Activated CD4-positive, alpha-beta memory T cell treated with anti-CD3 and anti-CD28 coated beads for 36 hours (primary cell): ENCODE measurements at regions of chr11 and their contacts with region 1.

Region 1: DNA sequence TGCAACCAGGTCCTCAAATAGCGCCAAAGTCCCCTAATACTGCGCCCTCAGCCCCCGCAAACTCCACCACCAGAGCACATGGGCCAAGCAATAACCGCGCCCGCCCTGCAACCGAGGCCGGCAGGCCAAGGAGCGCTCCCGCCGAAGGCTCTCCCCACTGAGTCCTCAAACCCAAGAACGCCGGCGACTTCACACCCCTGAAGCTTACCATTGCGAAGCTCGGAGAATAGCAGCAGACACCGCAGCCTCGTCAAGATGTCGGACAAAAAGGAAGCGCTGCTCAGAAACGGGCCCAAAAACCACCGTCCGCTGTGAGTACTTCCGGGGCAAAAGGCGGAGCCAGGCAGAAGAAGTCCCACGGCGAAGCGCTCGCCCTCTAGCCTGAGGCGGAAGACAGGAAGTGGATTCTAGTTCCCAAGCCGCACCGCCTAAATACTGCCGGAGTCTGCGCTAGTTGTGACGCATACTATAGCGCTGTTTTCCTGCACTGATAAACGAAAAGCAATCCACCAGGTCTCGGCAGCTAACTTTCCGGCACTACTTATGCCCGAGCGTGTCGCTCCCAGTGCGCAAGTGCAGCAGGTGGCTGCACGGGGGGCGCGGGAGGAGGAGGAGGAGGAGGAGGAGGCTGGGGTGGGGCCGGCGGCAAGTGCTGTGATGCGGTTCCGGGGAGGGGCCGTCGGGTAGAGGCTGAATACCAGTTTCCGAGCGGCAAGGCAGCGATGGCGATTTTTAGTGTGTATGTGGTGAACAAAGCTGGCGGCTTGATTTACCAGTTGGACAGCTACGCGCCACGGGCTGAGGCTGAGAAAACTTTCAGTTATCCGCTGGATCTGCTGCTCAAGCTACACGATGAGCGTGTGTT is at the starts of genes RPS25 and TRAPPC4:
- DNase-seq: peak; percentile 98
- H3K4me3 Mint-ChIP-seq: peak within 1 kb of the TSS; percentile 99
- H3K27ac Mint-ChIP-seq: peak within 1 kb of the TSS; percentile 99
- H3K4me1 Mint-ChIP-seq: peaks cover 54% of the 10 kb centered on the region
- H3K27me3 Mint-ChIP-seq: no peaks in the 10 kb centered on the region
- total RNA-seq, gene RPS25: 1,852 to 1,922 TPM
- total RNA-seq, gene TRAPPC4: 86.4 to 87.8 TPM

Region 2: DNA sequence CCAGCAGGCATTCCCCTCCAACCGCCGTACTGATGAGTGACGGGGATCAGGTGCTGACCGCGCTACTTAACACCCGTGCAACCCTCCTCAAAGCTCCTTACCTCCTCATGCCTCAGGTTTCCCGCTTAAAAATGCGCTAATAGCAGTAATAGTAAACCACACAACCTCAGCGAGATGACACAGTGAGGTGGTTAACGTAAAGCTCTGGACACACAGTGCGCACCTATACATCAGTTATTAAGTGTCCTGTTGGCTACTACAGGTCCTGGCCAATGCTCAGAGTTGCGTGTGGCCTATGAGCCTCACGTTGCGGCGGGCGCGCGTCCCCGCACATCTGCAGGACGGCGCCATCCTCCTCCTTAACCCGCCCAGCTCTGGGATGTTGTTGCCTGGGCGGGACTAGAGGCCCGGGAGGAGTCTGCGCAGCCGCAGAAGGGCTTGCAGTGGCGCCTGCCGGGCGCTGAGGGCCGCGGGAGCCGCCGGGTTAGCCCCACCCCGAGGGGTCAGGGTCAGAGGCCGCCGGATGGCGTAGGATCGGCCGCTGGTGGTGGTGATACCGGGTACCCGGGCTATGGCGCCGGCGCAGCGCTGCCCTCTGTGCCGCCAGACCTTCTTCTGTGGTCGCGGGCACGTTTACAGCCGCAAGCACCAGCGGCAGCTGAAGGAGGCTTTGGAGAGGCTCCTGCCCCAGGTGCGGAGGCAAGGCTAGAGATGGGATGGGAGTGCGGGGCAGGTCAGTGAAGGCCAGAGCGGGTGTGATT is 20.5 kb before region 1 on chr11 and contains the start of gene CENATAC:
- CTCF ChIA-PET with region 1: interaction called, 5 read pairs
- POLR2A ChIA-PET with region 1: interaction called, 23 read pairs
- intact Hi-C with region 1: loop called (anchors 1 kb)
- DNase-seq: peak; percentile 98
- H3K4me3 Mint-ChIP-seq: peak within 1 kb of the TSS; percentile 88
- H3K27ac Mint-ChIP-seq: peak within 1 kb of the TSS; percentile 94
- H3K4me1 Mint-ChIP-seq: peaks cover 28% of the 10 kb centered on the region
- H3K27me3 Mint-ChIP-seq: no peaks in the 10 kb centered on the region
- total RNA-seq, gene CENATAC: 21.4 to 22.3 TPM

Region 3: GRCh38 chr11:119030329-119031049 is 12.2 kb after region 1 on chr11 and contains the start of gene SLC37A4:
- CTCF ChIA-PET with region 1: interaction called, 8 read pairs
- POLR2A ChIA-PET with region 1: interaction called, 17 read pairs
- intact Hi-C with region 1: loop called (anchors 1 kb)
- DNase-seq: peak; percentile 99
- H3K4me3 Mint-ChIP-seq: peak within 1 kb of the TSS; percentile 82
- H3K27ac Mint-ChIP-seq: peak within 1 kb of the TSS; percentile 89
- H3K4me1 Mint-ChIP-seq: peaks cover 18% of the 10 kb centered on the region
- H3K27me3 Mint-ChIP-seq: no peaks in the 10 kb centered on the region
- total RNA-seq, gene SLC37A4: 33.4 to 37.0 TPM